H1 (cell line): ENCODE measurements at regions of chr11 and their contacts with region 1.

Region 1: DNA sequence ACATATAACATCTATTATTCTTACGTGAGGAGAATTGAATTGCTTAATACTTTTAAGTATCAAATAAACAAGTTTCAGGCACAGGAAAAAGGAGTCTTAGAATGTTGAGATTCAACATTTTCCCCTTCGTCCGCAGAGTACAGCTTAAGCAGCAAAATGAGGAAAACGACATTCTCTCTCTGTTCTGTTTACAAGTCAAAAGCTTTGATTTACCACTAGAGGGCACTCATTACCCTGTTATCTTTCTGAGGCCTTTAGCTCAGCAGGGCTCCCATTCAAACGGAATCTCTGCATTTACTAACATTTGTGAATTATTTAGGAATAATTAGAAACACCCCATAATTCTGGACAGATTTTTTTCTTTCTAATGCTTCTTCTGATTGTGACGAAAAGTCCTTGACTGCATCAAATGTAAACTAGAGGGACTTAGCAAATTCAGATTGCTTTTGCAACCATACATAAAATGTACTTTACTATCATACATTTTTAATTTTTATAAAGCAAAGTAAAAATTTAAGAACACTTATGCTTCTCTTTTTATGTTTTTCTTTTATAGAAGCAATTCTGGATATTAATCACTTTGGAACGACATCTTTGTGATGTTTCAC is 75.0 kb downstream of the JRKL start:
- DNase-seq: no peak
- H3K4me3 ChIP-seq: no peak overlapping the region
- H3K27ac ChIP-seq: no peak overlapping the region
- H3K4me1 ChIP-seq: peaks cover 0 to 3% (median 0%) of the 10 kb centered on the region in 4 experiments; a peak in 1 of 7 replicates
- H3K27me3 ChIP-seq: peaks cover 0 to 2% (median 0%) of the 10 kb centered on the region in 4 experiments; a peak in 1 of 7 replicates
- CTCF ChIP-seq: peak in 2 of 3 experiments; percentile 63 to 72; a peak in 3 of 4 replicates
- EP300 ChIP-seq: no peak
- POLR2A ChIP-seq: no peak
- RAD21 ChIP-seq: peak; percentile 95 to 96

Region 2: GRCh38 chr11:96366024-96366423 is 98.8 kb before region 1 on chr11:
- CTCF ChIA-PET with region 1: no interaction called
- POLR2A ChIA-PET with region 1: no interaction called
- DNase-seq: no peak
- H3K4me3 ChIP-seq: no peak overlapping the region
- H3K27ac ChIP-seq: no peak overlapping the region
- H3K4me1 ChIP-seq: no peaks in the 10 kb centered on the region
- H3K27me3 ChIP-seq: no peaks in the 10 kb centered on the region
- CTCF ChIP-seq: no peak
- EP300 ChIP-seq: no peak
- POLR2A ChIP-seq: no peak
- RAD21 ChIP-seq: no peak

Region 3: DNA sequence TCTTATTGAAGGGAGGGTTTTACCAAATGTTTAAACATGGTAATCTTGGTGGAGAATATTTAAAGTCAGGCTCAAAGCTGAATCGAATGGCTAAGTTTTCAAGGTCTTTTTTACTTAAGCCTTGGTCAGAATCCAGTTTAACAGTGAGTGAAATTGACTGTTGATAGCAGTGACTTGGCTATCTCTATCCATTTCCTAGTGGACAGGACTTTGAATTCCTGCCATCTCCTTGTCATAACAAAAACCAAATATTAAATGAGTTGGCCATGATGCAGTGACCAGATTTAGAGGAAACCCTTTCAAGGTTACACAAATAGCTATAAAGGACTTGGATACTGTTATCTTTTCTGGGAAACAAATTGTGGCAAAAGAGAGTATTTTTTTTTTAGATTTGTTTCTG is 17.0 kb after region 1 on chr11:
- CTCF ChIA-PET with region 1: interaction called, 14 read pairs
- POLR2A ChIA-PET with region 1: no interaction called
- DNase-seq: no peak
- H3K4me3 ChIP-seq: no peak overlapping the region
- H3K27ac ChIP-seq: no peak overlapping the region
- H3K4me1 ChIP-seq: no peaks in the 10 kb centered on the region
- H3K27me3 ChIP-seq: no peaks in the 10 kb centered on the region
- CTCF ChIP-seq: no peak
- EP300 ChIP-seq: no peak
- POLR2A ChIP-seq: no peak
- RAD21 ChIP-seq: no peak

Region 4: GRCh38 chr11:96648991-96649390 is 184.2 kb after region 1 on chr11:
- CTCF ChIA-PET with region 1: interaction called, 10 read pairs
- POLR2A ChIA-PET with region 1: no interaction called
- DNase-seq: no peak
- H3K4me3 ChIP-seq: no peak overlapping the region
- H3K27ac ChIP-seq: no peak overlapping the region
- H3K4me1 ChIP-seq: peaks cover 0 to 9% (median 1%) of the 10 kb centered on the region in 4 experiments; a peak in 2 of 7 replicates
- H3K27me3 ChIP-seq: no peaks in the 10 kb centered on the region
- CTCF ChIP-seq: no peak
- EP300 ChIP-seq: no peak
- POLR2A ChIP-seq: no peak
- RAD21 ChIP-seq: no peak

Region 5: DNA sequence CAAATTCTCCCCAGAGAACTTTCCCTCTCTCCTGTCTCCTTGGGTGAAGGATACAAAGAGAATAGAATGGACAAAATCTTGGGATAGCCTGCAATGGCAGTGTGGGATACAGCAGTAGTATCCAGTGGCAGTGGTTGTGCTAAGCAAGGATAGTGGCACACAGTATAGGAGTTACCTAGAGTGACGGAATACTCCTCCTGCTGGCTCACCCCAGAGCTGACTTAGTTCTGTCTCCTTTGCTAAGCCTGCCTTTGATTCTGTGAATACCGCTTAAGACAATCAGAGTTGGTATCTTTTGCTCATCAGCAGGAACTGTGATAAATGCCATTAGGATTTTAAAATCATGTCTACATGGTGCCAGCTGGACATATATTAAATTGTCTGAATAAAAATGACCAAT is 329.3 kb after region 1 on chr11:
- CTCF ChIA-PET with region 1: interaction called, 26 read pairs
- POLR2A ChIA-PET with region 1: interaction called, 3 read pairs
- DNase-seq: peak in 1 of 2 experiments; percentile 3
- H3K4me3 ChIP-seq: no peak overlapping the region
- H3K27ac ChIP-seq: no peak overlapping the region
- H3K4me1 ChIP-seq: no peaks in the 10 kb centered on the region
- H3K27me3 ChIP-seq: no peaks in the 10 kb centered on the region
- CTCF ChIP-seq: peak in 2 of 3 experiments; percentile 42 to 44; a peak in 2 of 4 replicates
- EP300 ChIP-seq: no peak
- POLR2A ChIP-seq: no peak
- RAD21 ChIP-seq: peak; percentile 57 to 64

Region 6: GRCh38 chr11:97140885-97141494 is 676.2 kb after region 1 on chr11:
- CTCF ChIA-PET with region 1: interaction called, 35 read pairs
- POLR2A ChIA-PET with region 1: interaction called, 3 read pairs
- DNase-seq: no peak
- H3K4me3 ChIP-seq: no peak overlapping the region
- H3K27ac ChIP-seq: no peak overlapping the region
- H3K4me1 ChIP-seq: no peaks in the 10 kb centered on the region
- H3K27me3 ChIP-seq: peaks cover 0 to 1% (median 0%) of the 10 kb centered on the region in 4 experiments; a peak in 1 of 7 replicates
- CTCF ChIP-seq: peak in 2 of 3 experiments; percentile 57 to 60; a peak in 2 of 4 replicates
- EP300 ChIP-seq: no peak
- POLR2A ChIP-seq: no peak
- RAD21 ChIP-seq: peak; percentile 76 to 82